ENCODE measurements at regions of chr17 and their contacts with region 1.

Region 1: GRCh38 chr17:40499551-40500174 is 1.8 kb downstream of the TNS4 start:
- DNase-seq: no peak
- ATAC-seq: no peak
- H3K4me3 Mint-ChIP-seq: no peak overlapping the region
- H3K27ac Mint-ChIP-seq: no peak overlapping the region
- H3K4me1 Mint-ChIP-seq: peaks cover 2% of the 10 kb centered on the region
- H3K27me3 Mint-ChIP-seq: peaks cover 4% of the 10 kb centered on the region

Region 2: DNA sequence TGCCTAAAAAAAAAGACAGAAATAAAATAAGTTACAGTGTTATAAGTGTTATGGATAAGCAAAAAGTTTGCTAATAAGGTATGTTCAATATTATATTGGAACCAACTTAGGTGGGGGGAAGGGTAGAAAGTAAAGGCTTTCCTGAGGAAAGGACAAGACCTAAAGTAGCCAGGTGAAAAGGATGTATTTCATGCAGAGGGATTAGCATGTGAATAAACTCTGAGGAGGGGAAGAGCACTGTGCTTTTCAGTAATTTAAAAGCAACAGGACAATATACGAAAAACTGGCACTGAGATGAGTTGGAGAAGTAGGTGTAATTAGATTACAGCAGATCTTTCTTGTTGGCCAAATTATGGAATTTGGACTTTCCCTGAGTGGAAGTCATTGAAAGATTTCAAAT is 89.6 kb before region 1 on chr17:
- CTCF ChIA-PET with region 1: no interaction called
- POLR2A ChIA-PET with region 1: no interaction called
- intact Hi-C with region 1: no loop called
- DNase-seq: no peak
- ATAC-seq: no peak
- H3K4me3 Mint-ChIP-seq: no peak overlapping the region
- H3K27ac Mint-ChIP-seq: no peak overlapping the region
- H3K4me1 Mint-ChIP-seq: peaks cover under 1% of the 10 kb centered on the region
- H3K27me3 Mint-ChIP-seq: no peaks in the 10 kb centered on the region

Region 3: DNA sequence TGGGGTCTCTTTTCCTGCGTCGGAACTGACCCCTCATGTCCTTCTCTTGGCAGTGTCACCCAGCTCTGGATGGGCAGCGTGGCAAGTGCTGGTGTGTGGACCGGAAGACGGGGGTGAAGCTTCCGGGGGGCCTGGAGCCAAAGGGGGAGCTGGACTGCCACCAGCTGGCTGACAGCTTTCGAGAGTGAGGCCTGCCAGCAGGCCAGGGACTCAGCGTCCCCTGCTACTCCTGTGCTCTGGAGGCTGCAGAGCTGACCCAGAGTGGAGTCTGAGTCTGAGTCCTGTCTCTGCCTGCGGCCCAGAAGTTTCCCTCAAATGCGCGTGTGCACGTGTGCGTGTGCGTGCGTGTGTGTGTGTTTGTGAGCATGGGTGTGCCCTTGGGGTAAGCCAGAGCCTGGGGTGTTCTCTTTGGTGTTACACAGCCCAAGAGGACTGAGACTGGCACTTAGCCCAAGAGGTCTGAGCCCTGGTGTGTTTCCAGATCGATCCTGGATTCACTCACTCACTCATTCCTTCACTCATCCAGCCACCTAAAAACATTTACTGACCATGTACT is 43.2 kb before region 1 on chr17:
- CTCF ChIA-PET with region 1: no interaction called
- POLR2A ChIA-PET with region 1: interaction called, 12 read pairs
- intact Hi-C with region 1: no loop called
- DNase-seq: no peak
- ATAC-seq: no peak
- H3K4me3 Mint-ChIP-seq: no peak overlapping the region
- H3K27ac Mint-ChIP-seq: no peak overlapping the region
- H3K4me1 Mint-ChIP-seq: peaks cover 11% of the 10 kb centered on the region
- H3K27me3 Mint-ChIP-seq: no peaks in the 10 kb centered on the region

Measured in activated CD4-positive, alpha-beta T cell treated with anti-CD3 and anti-CD28 coated beads for 36 hours (primary cell).